Dendritic cell treated with granulocyte-macrophage colony-stimulating factor and Interleukin-4, amounts not matched to agents 40 ng/mL and 50 ng/mL, for 4 days (primary cell): ENCODE measurements at regions of chr12 and their contacts with region 1.

Region 1: DNA sequence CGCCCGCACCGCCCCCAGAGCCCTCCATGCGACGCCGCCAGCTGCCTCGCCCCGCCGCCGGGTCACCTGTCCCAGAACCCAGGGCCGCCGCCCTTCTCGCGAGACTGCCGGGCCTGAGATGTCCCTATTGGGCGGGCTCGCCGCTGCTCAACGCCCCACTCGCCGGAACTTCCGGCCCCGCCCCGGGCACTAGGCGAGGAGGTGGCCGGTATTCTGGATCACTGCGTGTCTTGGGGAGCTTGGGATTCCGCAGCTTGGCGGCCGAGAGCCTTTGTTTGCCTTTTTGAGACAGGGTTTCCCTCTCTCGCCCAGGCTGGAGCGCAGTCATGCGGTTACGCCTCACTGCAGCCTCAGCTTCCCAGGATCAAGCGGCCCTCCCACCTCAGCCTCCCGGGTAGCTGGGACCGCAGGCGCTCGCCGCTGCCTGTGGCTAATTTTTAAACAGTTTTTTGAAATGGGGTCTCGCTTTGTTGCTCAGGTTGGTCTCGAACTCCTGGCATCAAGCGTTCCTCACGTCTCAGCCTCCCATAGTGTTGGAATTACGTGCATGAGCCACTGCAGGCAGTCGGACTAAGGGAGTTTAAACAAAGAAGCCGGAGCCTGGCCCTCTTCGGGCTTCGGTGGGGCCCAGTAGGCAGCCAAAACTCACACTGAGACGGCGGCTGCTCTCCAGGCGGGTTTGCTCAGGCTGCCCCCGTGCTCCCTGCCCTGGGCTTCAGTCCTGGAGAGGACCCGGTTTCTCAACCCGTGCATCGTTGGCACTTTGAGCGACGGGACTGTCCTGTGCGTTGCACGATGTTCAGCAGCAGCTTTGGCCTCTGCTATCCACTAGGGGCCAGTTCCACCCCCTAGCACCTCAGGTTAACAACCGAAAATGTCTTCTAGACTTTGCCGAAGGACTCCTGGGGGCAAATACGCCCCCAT is at the start of gene SLC15A4:
- H3K4me3 Mint-ChIP-seq: peak within 1 kb of the TSS; percentile 84
- H3K27ac Mint-ChIP-seq: peak within 1 kb of the TSS; percentile 92
- H3K4me1 Mint-ChIP-seq: peaks cover 45% of the 10 kb centered on the region
- H3K27me3 Mint-ChIP-seq: no peaks in the 10 kb centered on the region

Region 2: GRCh38 chr12:128807161-128807724 is 16.9 kb before region 1 on chr12:
- intact Hi-C with region 1: loop called (anchors 2 kb)
- H3K4me3 Mint-ChIP-seq: peak overlapping the region; percentile 69
- H3K27ac Mint-ChIP-seq: peak overlapping the region; percentile 80
- H3K4me1 Mint-ChIP-seq: peaks cover 63% of the 10 kb centered on the region
- H3K27me3 Mint-ChIP-seq: no peaks in the 10 kb centered on the region

Region 3: GRCh38 chr12:128853575-128854197 is 29.5 kb after region 1 on chr12:
- intact Hi-C with region 1: loop called (anchors 2 kb)
- H3K4me3 Mint-ChIP-seq: peak overlapping the region; percentile 82
- H3K27ac Mint-ChIP-seq: peak overlapping the region; percentile 72
- H3K4me1 Mint-ChIP-seq: peaks cover 28% of the 10 kb centered on the region
- H3K27me3 Mint-ChIP-seq: peaks cover 12% of the 10 kb centered on the region